ENCODE measurements at regions of chr13 and their contacts with region 1.

Region 1: GRCh38 chr13:98548230-98548629 is 28.7 kb downstream of the STK24 start:
- DNase-seq: no peak
- H3K4me3 ChIP-seq: no peak overlapping the region
- H3K27ac ChIP-seq: no peak overlapping the region
- H3K4me1 ChIP-seq: peaks cover 6 to 11% (median 8%) of the 10 kb centered on the region in 4 experiments
- H3K27me3 ChIP-seq: no peaks in the 10 kb centered on the region
- CTCF ChIP-seq: no peak
- EP300 ChIP-seq: no peak
- POLR2A ChIP-seq: no peak
- RAD21 ChIP-seq: no peak

Region 2: GRCh38 chr13:98267080-98267912 is 280.9 kb before region 1 on chr13:
- CTCF ChIA-PET with region 1: no interaction called
- POLR2A ChIA-PET with region 1: no interaction called
- DNase-seq: no peak
- H3K4me3 ChIP-seq: no peak overlapping the region
- H3K27ac ChIP-seq: no peak overlapping the region
- H3K4me1 ChIP-seq: peaks cover 0 to under 1% (median 0%) of the 10 kb centered on the region in 4 experiments; a peak in 1 of 7 replicates
- H3K27me3 ChIP-seq: no peaks in the 10 kb centered on the region
- CTCF ChIP-seq: no peak
- EP300 ChIP-seq: no peak
- POLR2A ChIP-seq: no peak
- RAD21 ChIP-seq: no peak

Region 3: DNA sequence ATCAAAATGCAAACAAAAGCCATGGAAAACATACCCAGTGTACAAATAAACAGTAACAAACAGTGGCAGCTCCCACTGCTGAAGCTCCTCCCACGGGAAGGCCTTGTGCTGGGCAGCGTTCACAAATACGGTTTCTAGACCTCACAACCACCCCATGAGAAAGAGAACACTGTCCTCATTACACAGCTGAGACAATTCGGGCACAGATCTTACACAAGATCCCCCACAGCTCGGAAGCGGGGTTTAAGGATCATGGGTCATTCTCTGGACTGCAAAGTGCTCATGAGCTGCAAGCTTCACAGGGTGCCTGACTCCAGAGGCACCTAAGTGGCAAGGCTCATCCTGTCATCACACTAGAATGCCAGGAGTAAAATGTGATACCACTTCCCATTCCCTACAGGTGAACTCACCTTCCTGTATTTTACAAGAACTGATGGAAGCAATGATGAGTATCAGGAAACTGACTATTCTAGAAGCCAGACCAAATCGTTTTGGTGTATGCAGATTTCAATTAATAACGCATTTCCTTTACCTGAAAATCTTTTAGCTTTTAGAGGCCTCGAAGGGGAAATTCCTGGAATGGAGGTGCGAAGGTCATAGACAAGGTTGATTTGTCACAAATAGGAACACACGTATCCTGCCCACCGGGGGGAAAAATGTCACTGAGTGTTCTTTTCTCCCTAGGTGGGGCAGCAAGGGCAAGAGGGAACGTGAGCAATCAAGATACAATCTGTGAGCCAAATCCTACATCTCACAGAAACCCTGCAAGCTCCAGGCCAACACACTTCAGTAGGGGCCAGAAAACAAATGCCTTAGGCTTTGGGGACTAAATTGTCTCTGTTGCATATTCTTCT is 12.5 kb before region 1 on chr13:
- CTCF ChIA-PET with region 1: interaction called, 47 read pairs
- POLR2A ChIA-PET with region 1: interaction called, 3 read pairs
- DNase-seq: no peak
- H3K4me3 ChIP-seq: no peak overlapping the region
- H3K27ac ChIP-seq: no peak overlapping the region
- H3K4me1 ChIP-seq: peaks cover 1 to 8% (median 2%) of the 10 kb centered on the region in 4 experiments; a peak in 6 of 7 replicates
- H3K27me3 ChIP-seq: no peaks in the 10 kb centered on the region
- CTCF ChIP-seq: no peak
- EP300 ChIP-seq: no peak
- POLR2A ChIP-seq: no peak
- RAD21 ChIP-seq: no peak

Region 4: GRCh38 chr13:99165753-99166587 is 617.7 kb after region 1 on chr13:
- CTCF ChIA-PET with region 1: no interaction called
- POLR2A ChIA-PET with region 1: no interaction called
- DNase-seq: no peak
- H3K4me3 ChIP-seq: no peak overlapping the region
- H3K27ac ChIP-seq: no peak overlapping the region
- H3K4me1 ChIP-seq: no peaks in the 10 kb centered on the region
- H3K27me3 ChIP-seq: no peaks in the 10 kb centered on the region
- CTCF ChIP-seq: no peak
- EP300 ChIP-seq: no peak
- POLR2A ChIP-seq: no peak
- RAD21 ChIP-seq: no peak

Measured in H1 (cell line).